ENCODE measurements at regions of chr14 and their contacts with region 1.

Region 1: GRCh38 chr14:63432228-63432627 is 110.9 kb downstream of the PPP2R5E start:
- DNase-seq: no peak
- ATAC-seq: no peak
- H3K4me3 ChIP-seq: no peak overlapping the region
- H3K27ac ChIP-seq: no peak overlapping the region
- H3K4me1 ChIP-seq: peaks cover 8% of the 10 kb centered on the region
- H3K27me3 ChIP-seq: no peaks in the 10 kb centered on the region
- CTCF ChIP-seq: no peak
- EP300 ChIP-seq: no peak
- POLR2A ChIP-seq: no peak
- RAD21 ChIP-seq: no peak

Region 2: DNA sequence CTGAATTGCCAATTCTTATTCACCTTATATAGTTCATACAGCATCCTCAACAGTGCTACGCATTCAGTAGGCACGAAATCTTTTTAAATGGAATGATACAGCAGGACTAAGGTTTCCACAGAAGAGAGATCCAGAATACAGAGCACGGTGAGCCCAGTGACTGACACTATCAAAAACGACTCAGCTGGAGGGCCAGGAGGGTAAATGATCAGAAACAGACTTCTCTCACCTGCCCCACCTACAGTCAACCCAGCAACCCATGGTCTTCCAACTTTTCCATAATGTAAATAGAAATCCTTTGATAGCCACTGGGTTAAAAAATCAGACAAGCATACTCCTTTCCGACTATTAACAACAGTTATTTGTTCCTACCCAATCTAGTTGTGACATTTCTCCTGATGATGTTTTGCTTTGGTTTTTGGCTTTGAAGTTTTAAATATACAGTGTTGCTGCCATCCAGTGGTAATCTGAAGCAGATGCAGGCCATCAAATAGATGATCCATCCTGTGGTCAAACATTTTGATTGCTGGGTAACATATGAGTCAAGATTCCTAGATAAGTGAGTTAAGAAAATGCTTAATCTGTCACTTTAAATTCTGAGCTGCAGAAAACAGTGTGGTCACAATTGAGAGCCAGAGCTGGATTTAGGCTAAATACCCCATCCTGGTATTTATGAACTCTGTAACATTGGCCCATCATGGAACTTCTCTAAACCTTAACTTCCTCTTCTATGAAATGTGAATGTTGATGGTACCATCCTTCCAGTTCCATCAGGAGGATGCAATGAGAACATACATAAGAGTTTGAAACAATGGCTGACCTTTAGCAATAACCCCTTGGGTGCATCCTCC is 155.5 kb before region 1 on chr14:
- CTCF ChIA-PET with region 1: no interaction called
- POLR2A ChIA-PET with region 1: no interaction called
- RAD21 ChIA-PET with region 1: no interaction called
- SMC1A ChIA-PET with region 1: no interaction called
- in situ Hi-C with region 1: no loop called
- intact Hi-C with region 1: no loop called
- DNase-seq: no peak
- ATAC-seq: peak; percentile 78
- H3K4me3 ChIP-seq: no peak overlapping the region
- H3K27ac ChIP-seq: no peak overlapping the region
- H3K4me1 ChIP-seq: no peaks in the 10 kb centered on the region
- H3K27me3 ChIP-seq: peaks cover 0 to 3% of the 10 kb centered on the region in 2 experiments; a peak in 1 of 4 replicates
- CTCF ChIP-seq: peak; percentile 66 to 83 (median 74); a peak in 5 of 6 replicates
- EP300 ChIP-seq: no peak
- POLR2A ChIP-seq: no peak
- RAD21 ChIP-seq: peak; percentile 83

Region 3: DNA sequence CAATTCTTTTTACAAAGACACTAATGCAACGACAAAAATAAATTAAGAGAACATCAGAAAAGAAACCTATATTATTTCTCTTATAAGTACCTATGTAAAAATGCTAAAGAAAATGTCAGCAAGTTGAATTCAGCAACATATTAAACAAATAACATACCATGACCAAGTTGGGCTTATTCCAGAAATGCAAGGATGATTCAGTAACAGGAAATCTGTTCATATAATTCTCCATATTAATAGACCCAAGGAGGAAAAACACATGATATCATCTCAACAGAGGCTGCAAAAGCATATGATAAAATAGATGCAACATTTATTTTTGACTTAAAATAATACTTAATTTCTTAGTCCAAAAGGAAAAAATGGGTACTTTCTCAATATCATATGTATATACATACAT is 88.3 kb before region 1 on chr14:
- CTCF ChIA-PET with region 1: no interaction called
- POLR2A ChIA-PET with region 1: no interaction called
- RAD21 ChIA-PET with region 1: no interaction called
- SMC1A ChIA-PET with region 1: no interaction called
- in situ Hi-C with region 1: no loop called
- intact Hi-C with region 1: no loop called
- DNase-seq: no peak
- ATAC-seq: no peak
- H3K4me3 ChIP-seq: no peak overlapping the region
- H3K27ac ChIP-seq: no peak overlapping the region
- H3K4me1 ChIP-seq: no peaks in the 10 kb centered on the region
- H3K27me3 ChIP-seq: no peaks in the 10 kb centered on the region
- CTCF ChIP-seq: no peak
- EP300 ChIP-seq: no peak
- POLR2A ChIP-seq: no peak
- RAD21 ChIP-seq: no peak

Region 4: GRCh38 chr14:63406333-63406732 is 25.9 kb before region 1 on chr14:
- CTCF ChIA-PET with region 1: no interaction called
- POLR2A ChIA-PET with region 1: no interaction called
- RAD21 ChIA-PET with region 1: no interaction called
- SMC1A ChIA-PET with region 1: interaction called, 11 read pairs
- in situ Hi-C with region 1: no loop called
- intact Hi-C with region 1: no loop called
- DNase-seq: no peak
- ATAC-seq: no peak
- H3K4me3 ChIP-seq: no peak overlapping the region
- H3K27ac ChIP-seq: no peak overlapping the region
- H3K4me1 ChIP-seq: no peaks in the 10 kb centered on the region
- H3K27me3 ChIP-seq: no peaks in the 10 kb centered on the region
- CTCF ChIP-seq: no peak
- EP300 ChIP-seq: no peak
- POLR2A ChIP-seq: no peak
- RAD21 ChIP-seq: no peak

Measured in GM12878 (cell line).